ENCODE measurements at regions of chrX and their contacts with region 1.

Region 1: DNA sequence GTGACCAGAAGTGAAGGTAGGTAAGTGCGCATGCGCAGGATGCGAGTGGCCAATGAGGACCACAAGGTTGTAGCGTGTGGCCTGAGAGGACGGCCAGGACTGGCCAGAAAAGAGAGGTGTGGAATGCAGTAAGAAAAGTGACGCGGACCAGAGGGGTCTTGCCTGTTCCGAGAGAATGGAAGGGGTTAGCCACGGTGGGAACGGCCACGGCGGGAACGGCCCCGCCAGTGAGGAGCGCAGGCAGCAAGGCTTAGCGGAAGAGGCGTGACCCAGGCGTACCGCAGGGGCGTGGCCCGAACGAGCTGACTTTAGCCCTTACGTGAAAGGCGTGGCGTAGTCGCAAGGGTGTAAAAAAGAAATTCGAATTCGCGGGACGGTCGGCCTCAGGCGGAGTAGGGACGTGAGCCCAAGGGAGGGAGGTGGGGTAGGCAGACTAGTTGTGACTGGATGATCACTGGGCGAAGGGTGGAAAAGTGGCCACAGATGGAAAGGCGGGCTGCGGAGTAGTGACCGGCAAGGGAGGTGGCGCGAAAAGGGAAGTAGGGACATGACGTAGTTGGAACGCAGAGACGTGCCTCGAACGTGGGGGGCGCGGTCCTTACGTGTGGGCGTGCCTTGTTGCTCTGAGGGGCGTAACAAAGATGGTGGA is 10.4 kb upstream of the CLTRN start:
- DNase-seq: peak; percentile 90 to 99 (median 98)
- H3K4me3 ChIP-seq: peak overlapping the region; percentile 88 to 92
- H3K4me3 Mint-ChIP-seq: no peak overlapping the region
- H3K27ac ChIP-seq: peak overlapping the region; percentile 100
- H3K27ac Mint-ChIP-seq: no peak overlapping the region
- H3K4me1 ChIP-seq: peaks cover 19% of the 10 kb centered on the region
- H3K4me1 Mint-ChIP-seq: peaks cover 8 to 20% (median 10%) of the 10 kb centered on the region in 4 donors
- H3K27me3 ChIP-seq: no peaks in the 10 kb centered on the region
- H3K27me3 Mint-ChIP-seq: no peaks in the 10 kb centered on the region

Region 2: DNA sequence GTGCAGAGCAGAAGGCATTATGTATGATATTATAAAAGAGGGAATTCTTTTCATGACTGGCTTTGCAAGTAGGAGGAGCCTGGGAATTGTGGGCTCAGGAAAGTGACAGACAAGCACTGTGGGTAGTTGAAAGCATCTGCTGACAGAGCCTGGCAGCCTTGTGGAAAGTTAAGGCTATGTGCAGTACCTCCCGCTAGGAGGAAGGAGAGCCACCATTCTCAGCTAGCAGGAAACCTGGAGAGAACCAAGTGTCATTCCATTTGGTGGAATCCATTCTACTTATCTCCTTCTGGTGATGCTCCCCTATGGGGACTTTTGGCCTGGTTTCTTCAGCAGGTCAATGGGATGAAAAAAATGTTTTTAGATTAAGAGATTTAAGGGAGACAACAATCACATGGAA is 486.9 kb before region 1 on chrX:
- CTCF ChIA-PET with region 1: no interaction called
- POLR2A ChIA-PET with region 1: no interaction called
- intact Hi-C with region 1: no loop called
- DNase-seq: no peak
- H3K4me3 ChIP-seq: no peak overlapping the region
- H3K4me3 Mint-ChIP-seq: no peak overlapping the region
- H3K27ac ChIP-seq: no peak overlapping the region
- H3K27ac Mint-ChIP-seq: no peak overlapping the region
- H3K4me1 ChIP-seq: no peaks in the 10 kb centered on the region
- H3K4me1 Mint-ChIP-seq: no peaks in the 10 kb centered on the region
- H3K27me3 ChIP-seq: no peaks in the 10 kb centered on the region
- H3K27me3 Mint-ChIP-seq: no peaks in the 10 kb centered on the region

Region 3: DNA sequence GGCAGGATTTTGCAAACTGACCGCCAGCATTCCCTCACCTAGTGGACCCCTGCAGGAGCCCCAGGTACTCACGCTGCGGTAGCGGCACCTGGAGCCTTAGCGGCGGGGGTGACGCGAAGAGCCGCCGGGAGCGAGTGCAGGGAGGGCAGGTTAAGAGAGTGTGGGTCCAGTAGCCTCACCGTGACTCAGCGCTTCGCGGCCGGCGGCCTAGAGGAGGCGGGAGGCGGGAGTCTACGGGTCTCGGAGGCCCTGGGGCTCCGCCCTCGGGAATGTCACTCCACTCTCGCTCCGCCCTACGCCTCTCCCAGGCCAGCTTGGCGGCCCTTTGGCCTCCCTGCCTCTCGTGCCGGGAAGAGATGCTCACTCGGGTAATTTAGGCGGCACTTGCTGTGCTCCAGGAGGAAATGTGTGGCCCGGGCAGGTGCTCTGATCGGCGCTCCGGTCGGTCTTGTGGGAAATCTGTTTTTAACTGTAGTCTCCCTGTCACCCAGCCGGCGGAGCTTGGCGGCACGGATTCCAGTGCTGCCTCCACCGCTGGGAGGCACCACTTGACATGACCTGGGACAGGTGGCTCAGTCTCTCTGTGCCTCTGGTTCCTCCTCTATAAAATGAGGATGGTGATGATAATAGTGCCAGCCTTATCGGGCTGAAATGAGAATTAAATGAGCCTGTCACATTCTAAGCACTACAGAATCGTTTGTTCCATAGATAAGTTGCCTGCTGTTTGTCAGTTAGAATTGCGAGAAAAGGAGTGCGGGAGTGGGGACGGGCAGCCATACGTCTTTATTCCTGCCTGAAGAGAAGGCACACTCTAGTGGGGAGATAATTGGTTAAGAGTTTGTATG is 181.6 kb before region 1 on chrX and contains the start of gene PIR:
- CTCF ChIA-PET with region 1: no interaction called
- POLR2A ChIA-PET with region 1: no interaction called
- intact Hi-C with region 1: loop called (anchors 1 kb)
- DNase-seq: peak; percentile 2 to 37 (median 14)
- H3K4me3 ChIP-seq: peak within 1 kb of the TSS; percentile 23 to 32
- H3K4me3 Mint-ChIP-seq: peak within 1 kb of the TSS; percentile 73 to 88 (median 80)
- H3K27ac ChIP-seq: no peak within 1 kb of the TSS
- H3K27ac Mint-ChIP-seq: no peak within 1 kb of the TSS
- H3K4me1 ChIP-seq: peaks cover 3% of the 10 kb centered on the region
- H3K4me1 Mint-ChIP-seq: peaks cover 4 to 8% (median 5%) of the 10 kb centered on the region in 4 donors
- H3K27me3 ChIP-seq: no peaks in the 10 kb centered on the region
- H3K27me3 Mint-ChIP-seq: peaks cover 0 to 4% of the 10 kb centered on the region in 2 donors
- total RNA-seq, gene PIR: 0.53 TPM in 1 of 2 experiments, not detected in the other

Region 4: DNA sequence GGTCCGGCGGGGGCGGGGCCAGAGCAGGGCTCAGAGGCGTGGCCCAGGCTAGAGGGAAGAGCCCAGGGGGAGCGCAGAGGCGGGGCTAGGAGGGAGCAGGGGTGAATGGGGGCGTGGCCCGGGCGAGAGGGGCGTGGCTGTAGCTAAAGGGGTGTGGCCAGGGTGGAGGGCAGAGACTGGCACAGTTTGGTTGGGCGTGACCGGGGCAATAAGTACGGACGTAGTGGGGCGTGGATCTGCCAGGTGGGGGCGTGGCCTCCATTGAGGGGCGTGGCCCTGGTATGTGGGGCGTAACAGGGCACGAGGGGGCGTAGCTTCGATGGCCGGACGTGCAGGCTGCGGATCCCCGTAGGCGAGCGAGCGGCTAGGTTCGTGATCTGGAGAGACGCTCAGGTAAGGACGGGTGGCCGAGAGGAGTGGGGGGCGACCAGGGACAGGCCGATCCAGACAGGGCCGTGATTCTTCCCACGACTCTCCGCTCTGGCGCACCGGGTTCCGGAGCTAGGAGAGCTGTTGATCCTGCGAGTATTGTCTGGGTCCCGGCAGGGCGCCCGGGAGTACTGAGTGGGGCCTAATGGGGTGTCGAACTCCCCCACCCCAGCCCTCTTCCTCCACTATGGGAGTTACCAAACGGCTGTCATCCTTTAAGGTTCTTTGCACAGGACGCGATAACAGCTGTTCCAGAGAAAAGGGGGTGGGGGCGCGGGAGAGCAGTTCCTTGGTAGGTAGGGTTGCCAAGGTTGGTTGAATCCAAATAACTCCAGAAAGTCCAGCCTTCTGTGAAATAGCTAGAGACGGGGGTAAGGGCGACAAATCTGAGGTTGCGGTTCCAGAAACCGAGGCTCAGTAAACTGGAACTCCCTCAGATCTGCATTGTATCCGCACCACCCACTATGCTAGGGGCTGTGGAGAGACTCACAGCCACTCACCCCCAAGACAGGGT is 63.3 kb after region 1 on chrX and contains the start of gene CA5B:
- CTCF ChIA-PET with region 1: no interaction called
- POLR2A ChIA-PET with region 1: interaction called, 27 read pairs
- intact Hi-C with region 1: loop called (anchors 1 kb)
- DNase-seq: peak; percentile 95 to 100 (median 99)
- H3K4me3 ChIP-seq: peak within 1 kb of the TSS; percentile 57 to 81
- H3K4me3 Mint-ChIP-seq: peak within 1 kb of the TSS; percentile 94 to 99 (median 97)
- H3K27ac ChIP-seq: peak within 1 kb of the TSS; percentile 87
- H3K27ac Mint-ChIP-seq: peak within 1 kb of the TSS; percentile 93 to 99 (median 97)
- H3K4me1 ChIP-seq: peaks cover 40% of the 10 kb centered on the region
- H3K4me1 Mint-ChIP-seq: peaks cover 30 to 57% (median 45%) of the 10 kb centered on the region in 4 donors
- H3K27me3 ChIP-seq: no peaks in the 10 kb centered on the region
- H3K27me3 Mint-ChIP-seq: no peaks in the 10 kb centered on the region
- total RNA-seq, gene CA5B: 45.7 to 54.5 TPM

Region 5: GRCh38 chrX:15789979-15790768 is 115.2 kb after region 1 on chrX and contains the start of gene ZRSR2:
- CTCF ChIA-PET with region 1: no interaction called
- POLR2A ChIA-PET with region 1: interaction called, 13 read pairs
- intact Hi-C with region 1: loop called (anchors 1 kb)
- DNase-seq: peak; percentile 91 to 95 (median 94)
- H3K4me3 ChIP-seq: peak within 1 kb of the TSS; percentile 65 to 76
- H3K4me3 Mint-ChIP-seq: peak within 1 kb of the TSS in 1 of 8 donors; percentile 18
- H3K27ac ChIP-seq: peak within 1 kb of the TSS; percentile 83
- H3K27ac Mint-ChIP-seq: peak within 1 kb of the TSS in 1 of 7 donors; percentile 68
- H3K4me1 ChIP-seq: peaks cover 37% of the 10 kb centered on the region
- H3K4me1 Mint-ChIP-seq: peaks cover 13 to 35% (median 24%) of the 10 kb centered on the region in 4 donors
- H3K27me3 ChIP-seq: no peaks in the 10 kb centered on the region
- H3K27me3 Mint-ChIP-seq: no peaks in the 10 kb centered on the region
- total RNA-seq, gene ZRSR2: 30.1 to 30.7 TPM

Region 6: GRCh38 chrX:16786139-16786790 is 1111.3 kb after region 1 on chrX and contains the start of gene TXLNG:
- CTCF ChIA-PET with region 1: no interaction called
- POLR2A ChIA-PET with region 1: no interaction called
- intact Hi-C with region 1: loop called (anchors 1 kb)
- DNase-seq: peak; percentile 97 to 99 (median 99)
- H3K4me3 ChIP-seq: peak within 1 kb of the TSS; percentile 63 to 70
- H3K4me3 Mint-ChIP-seq: peak within 1 kb of the TSS; percentile 92 to 96 (median 94)
- H3K27ac ChIP-seq: peak within 1 kb of the TSS; percentile 77
- H3K27ac Mint-ChIP-seq: peak within 1 kb of the TSS; percentile 78 to 96 (median 92)
- H3K4me1 ChIP-seq: peaks cover 12% of the 10 kb centered on the region
- H3K4me1 Mint-ChIP-seq: peaks cover 13 to 36% (median 21%) of the 10 kb centered on the region in 4 donors
- H3K27me3 ChIP-seq: no peaks in the 10 kb centered on the region
- H3K27me3 Mint-ChIP-seq: no peaks in the 10 kb centered on the region
- total RNA-seq, gene TXLNG: 17.8 to 19.8 TPM

Region 7: DNA sequence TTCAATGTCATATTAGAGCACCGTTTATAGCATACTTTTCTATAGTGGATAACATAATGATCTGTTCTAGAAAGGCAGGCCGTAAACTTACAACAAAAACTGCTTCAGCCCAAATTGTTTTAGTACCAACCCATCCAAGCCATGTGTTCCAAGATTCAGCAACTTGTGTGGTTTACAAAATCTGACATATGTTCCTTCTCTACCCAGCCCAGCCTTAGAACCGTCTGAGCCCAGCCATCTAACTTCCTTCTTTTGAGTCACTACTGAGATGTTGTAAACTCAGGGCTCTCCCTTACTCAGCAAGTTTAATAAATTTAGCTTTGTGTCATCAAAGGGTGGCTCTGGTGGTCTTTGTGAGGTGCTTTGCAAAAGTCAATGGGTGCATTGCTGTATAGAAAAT is 1239.1 kb after region 1 on chrX:
- CTCF ChIA-PET with region 1: no interaction called
- POLR2A ChIA-PET with region 1: no interaction called
- intact Hi-C with region 1: no loop called
- DNase-seq: no peak
- H3K4me3 ChIP-seq: no peak overlapping the region
- H3K4me3 Mint-ChIP-seq: no peak overlapping the region
- H3K27ac ChIP-seq: no peak overlapping the region
- H3K27ac Mint-ChIP-seq: no peak overlapping the region
- H3K4me1 ChIP-seq: no peaks in the 10 kb centered on the region
- H3K4me1 Mint-ChIP-seq: no peaks in the 10 kb centered on the region
- H3K27me3 ChIP-seq: no peaks in the 10 kb centered on the region
- H3K27me3 Mint-ChIP-seq: peaks cover 0 to 3% of the 10 kb centered on the region in 2 donors